Naive thymus-derived CD8-positive, alpha-beta T cell (primary cell): ENCODE measurements at regions of chr10 and their contacts with region 1.

Region 1: DNA sequence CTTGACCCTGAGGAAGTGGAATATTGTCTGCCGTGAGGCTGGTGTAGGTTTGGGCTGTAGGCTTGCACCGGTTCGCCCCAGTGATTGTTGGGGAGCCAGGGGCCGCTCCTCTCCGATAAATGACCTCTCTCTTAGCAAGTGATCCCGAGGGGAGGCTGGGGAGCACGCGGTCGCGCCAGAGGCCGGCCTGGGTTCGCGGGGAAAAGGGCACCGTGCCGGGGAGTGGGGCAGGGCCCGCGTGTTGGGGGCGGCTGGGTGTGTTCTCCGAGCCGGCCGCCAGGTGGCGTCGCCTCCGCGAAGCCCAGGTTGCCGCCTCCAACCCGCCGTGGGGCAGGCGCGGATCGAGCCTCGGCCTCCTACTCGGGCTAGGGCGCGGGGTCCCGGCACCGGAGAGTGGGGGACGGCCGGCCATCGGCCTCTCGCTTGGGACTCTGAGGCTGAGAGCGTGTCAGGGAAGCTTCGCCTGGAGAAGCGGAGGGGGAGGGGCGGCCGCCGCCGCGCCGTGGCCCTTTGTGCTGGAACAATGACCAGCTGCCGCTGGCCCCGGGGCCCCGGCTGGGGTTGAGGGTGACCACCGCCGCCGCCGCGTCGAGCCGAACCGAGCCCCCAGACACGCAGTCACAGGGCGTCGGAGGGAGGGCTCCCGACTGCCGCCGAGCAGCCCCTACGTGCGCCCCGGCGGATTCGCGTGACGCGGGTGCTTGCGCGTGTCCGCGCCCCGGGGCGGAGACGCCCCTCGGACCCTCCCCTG is 442 bp upstream of the LZTS2 start:
- DNase-seq: peak; percentile 64 to 87 (median 80)
- ATAC-seq: peak; percentile 68 to 73
- H3K4me3 Mint-ChIP-seq: peak overlapping the region; percentile 81 to 95 (median 92)
- H3K27ac Mint-ChIP-seq: peak overlapping the region; percentile 87 to 97 (median 93)
- H3K4me1 Mint-ChIP-seq: peaks cover 25 to 33% (median 30%) of the 10 kb centered on the region in 4 donors
- H3K27me3 Mint-ChIP-seq: no peaks in the 10 kb centered on the region

Region 2: DNA sequence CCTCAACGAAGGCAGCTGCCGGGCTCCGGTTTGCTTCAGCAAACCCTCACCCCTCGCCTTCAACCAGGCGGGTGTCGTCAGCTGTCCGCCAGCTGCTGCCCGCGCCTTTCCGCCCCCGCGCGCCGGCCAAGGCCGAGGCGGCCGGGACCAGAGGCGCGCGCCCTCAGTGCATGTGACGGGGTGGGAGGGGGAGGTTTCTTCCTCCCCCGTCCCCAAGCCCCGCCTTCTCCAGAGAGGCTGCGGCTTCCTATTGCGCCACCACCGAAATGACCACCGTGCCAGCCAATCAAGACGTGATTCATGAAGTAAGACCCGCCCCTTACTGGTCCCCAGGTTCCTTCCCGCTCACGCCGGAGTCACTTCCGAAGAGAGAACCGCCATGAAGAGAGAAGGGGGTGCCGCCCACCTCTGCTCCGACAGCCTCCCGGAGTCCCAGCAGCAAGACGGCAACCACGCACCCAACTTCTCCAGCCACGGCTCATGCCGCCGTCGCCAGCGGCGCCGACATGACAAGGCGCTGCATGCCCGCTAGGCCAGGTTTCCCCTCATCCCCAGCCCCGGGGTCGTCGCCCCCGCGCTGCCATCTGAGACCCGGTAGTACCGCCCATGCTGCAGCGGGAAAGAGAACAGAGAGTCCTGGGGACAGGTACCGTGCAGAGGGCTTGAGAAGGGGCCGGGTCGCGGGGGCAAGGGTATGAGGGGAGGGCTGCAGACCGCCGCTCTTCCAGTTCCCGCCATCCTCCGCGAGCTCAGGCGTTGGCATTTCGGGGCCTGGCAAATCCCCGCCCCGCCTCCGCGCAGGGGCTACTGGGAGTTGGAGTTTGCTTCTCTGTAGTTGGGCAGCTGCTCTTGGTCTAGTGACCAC is 86.3 kb before region 1 on chr10 and contains the start of gene SLF2:
- POLR2A ChIA-PET with region 1: interaction called, 15 read pairs
- DNase-seq: peak; percentile 69 to 94 (median 90)
- ATAC-seq: peak; percentile 83 to 92
- H3K4me3 Mint-ChIP-seq: peak within 1 kb of the TSS; percentile 95 to 100 (median 99)
- H3K27ac Mint-ChIP-seq: peak within 1 kb of the TSS; percentile 93 to 99 (median 98)
- H3K4me1 Mint-ChIP-seq: peaks cover 18 to 61% (median 46%) of the 10 kb centered on the region in 4 donors
- H3K27me3 Mint-ChIP-seq: no peaks in the 10 kb centered on the region
- polyA plus RNA-seq, gene SLF2: 9.7 to 11.2 (median 11.0) TPM

Region 3: GRCh38 chr10:100969187-100970075 is 29.7 kb before region 1 on chr10 and contains the start of gene SEMA4G:
- POLR2A ChIA-PET with region 1: interaction called, 12 read pairs
- DNase-seq: peak; percentile 16 to 71 (median 41)
- ATAC-seq: peak; percentile 79 to 84
- H3K4me3 Mint-ChIP-seq: peak within 1 kb of the TSS; percentile 64 to 78 (median 72)
- H3K27ac Mint-ChIP-seq: peak within 1 kb of the TSS in 5 of 10 donors; percentile 9 to 76 (median 31)
- H3K4me1 Mint-ChIP-seq: peaks cover 6 to 28% (median 10%) of the 10 kb centered on the region in 4 donors
- H3K27me3 Mint-ChIP-seq: no peaks in the 10 kb centered on the region
- polyA plus RNA-seq, gene SEMA4G: 0.14 TPM in 1 of 3 donors, not detected in the others

Region 4: GRCh38 chr10:100986952-100987750 is 12.0 kb before region 1 on chr10 and contains the starts of genes MRPL43 and TWNK:
- POLR2A ChIA-PET with region 1: interaction called, 82 read pairs
- DNase-seq: peak; percentile 73 to 93 (median 83)
- ATAC-seq: peak; percentile 96 to 97
- H3K4me3 Mint-ChIP-seq: peak within 1 kb of the TSS; percentile 95 to 100 (median 97)
- H3K27ac Mint-ChIP-seq: peak within 1 kb of the TSS; percentile 85 to 97 (median 95)
- H3K4me1 Mint-ChIP-seq: peaks cover 21 to 56% (median 44%) of the 10 kb centered on the region in 4 donors
- H3K27me3 Mint-ChIP-seq: no peaks in the 10 kb centered on the region
- polyA plus RNA-seq, gene MRPL43: 117 to 136 (median 123) TPM
- polyA plus RNA-seq, gene TWNK: 5.3 to 18.2 (median 9.7) TPM

Region 5: GRCh38 chr10:101018600-101019439 is 19.7 kb after region 1 on chr10:
- POLR2A ChIA-PET with region 1: interaction called, 36 read pairs
- DNase-seq: peak; percentile 40 to 84 (median 56)
- ATAC-seq: peak; percentile 84 to 87
- H3K4me3 Mint-ChIP-seq: peak overlapping the region in 2 of 10 donors; percentile 5 to 24
- H3K27ac Mint-ChIP-seq: peak overlapping the region in 1 of 10 donors; percentile 43
- H3K4me1 Mint-ChIP-seq: peaks cover 7 to 14% (median 11%) of the 10 kb centered on the region in 4 donors
- H3K27me3 Mint-ChIP-seq: peaks cover 8 to 82% (median 49%) of the 10 kb centered on the region in 5 donors

Region 6: GRCh38 chr10:101031128-101031795 is 32.1 kb after region 1 on chr10 and contains the starts of genes PDZD7 and SFXN3:
- POLR2A ChIA-PET with region 1: interaction called, 34 read pairs
- DNase-seq: peak; percentile 89 to 98 (median 96)
- ATAC-seq: peak; percentile 80 to 83
- H3K4me3 Mint-ChIP-seq: peak within 1 kb of the TSS; percentile 86 to 99 (median 93)
- H3K27ac Mint-ChIP-seq: peak within 1 kb of the TSS; percentile 81 to 99 (median 97)
- H3K4me1 Mint-ChIP-seq: peaks cover 15 to 26% (median 19%) of the 10 kb centered on the region in 4 donors
- H3K27me3 Mint-ChIP-seq: peaks cover 0 to 3% (median 0%) of the 10 kb centered on the region in 5 donors
- polyA plus RNA-seq, gene PDZD7: 0.39 to 1.1 (median 0.89) TPM
- polyA plus RNA-seq, gene SFXN3: 9.9 to 11.5 (median 11.2) TPM

Region 7: DNA sequence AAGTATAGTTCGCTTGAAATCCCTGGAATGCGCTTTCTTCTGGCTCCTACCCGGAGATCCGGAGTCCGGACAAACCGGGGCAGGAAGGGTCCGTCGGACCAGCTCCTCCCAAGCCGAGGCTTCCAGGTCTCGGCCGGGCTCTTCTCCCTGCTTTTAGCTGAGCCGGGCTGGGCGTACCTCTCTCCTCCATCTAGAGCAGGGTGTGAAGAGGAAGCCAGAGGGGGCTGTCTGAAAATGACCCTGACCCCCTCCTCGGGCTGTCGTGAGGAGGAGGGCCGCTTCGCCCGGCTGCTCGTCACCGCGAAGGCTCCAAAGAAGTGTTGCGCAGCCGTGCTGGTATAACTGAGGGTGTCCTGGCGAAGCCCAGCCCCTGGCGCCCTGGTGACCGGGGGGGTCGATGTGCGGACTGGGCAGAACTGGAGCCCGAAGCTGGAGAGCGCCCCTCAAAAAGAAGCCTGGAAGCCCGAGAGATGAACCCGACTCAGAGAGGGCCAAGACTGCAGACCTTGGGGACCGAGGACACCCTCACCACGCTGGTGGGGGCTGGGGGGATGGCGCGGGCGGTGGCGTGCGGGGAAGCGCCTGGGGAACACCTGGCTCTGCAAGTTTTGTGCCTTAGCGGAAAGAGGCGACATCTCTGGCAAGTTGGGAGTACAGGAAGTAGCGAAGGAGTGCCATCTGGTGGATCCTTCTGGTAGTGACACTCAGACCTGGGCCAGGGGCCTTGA is 68.4 kb after region 1 on chr10:
- POLR2A ChIA-PET with region 1: no interaction called
- DNase-seq: peak; percentile 53 to 88 (median 74)
- ATAC-seq: peak; percentile 73 to 77
- H3K4me3 Mint-ChIP-seq: peak overlapping the region; percentile 86 to 95 (median 90)
- H3K27ac Mint-ChIP-seq: peak overlapping the region in 4 of 10 donors; percentile 37 to 50 (median 46)
- H3K4me1 Mint-ChIP-seq: peaks cover 9 to 48% (median 27%) of the 10 kb centered on the region in 4 donors
- H3K27me3 Mint-ChIP-seq: peaks cover 24 to 58% (median 37%) of the 10 kb centered on the region in 5 donors

Region 8: GRCh38 chr10:101249171-101249581 is 250.0 kb after region 1 on chr10:
- POLR2A ChIA-PET with region 1: no interaction called
- DNase-seq: no peak
- ATAC-seq: no peak
- H3K4me3 Mint-ChIP-seq: no peak overlapping the region
- H3K27ac Mint-ChIP-seq: no peak overlapping the region
- H3K4me1 Mint-ChIP-seq: no peaks in the 10 kb centered on the region
- H3K27me3 Mint-ChIP-seq: peaks cover 33 to 55% (median 52%) of the 10 kb centered on the region in 5 donors